Astrocyte of the cerebellum (primary cell): ENCODE measurements at regions of chr2 and their contacts with region 1.

Region 1: DNA sequence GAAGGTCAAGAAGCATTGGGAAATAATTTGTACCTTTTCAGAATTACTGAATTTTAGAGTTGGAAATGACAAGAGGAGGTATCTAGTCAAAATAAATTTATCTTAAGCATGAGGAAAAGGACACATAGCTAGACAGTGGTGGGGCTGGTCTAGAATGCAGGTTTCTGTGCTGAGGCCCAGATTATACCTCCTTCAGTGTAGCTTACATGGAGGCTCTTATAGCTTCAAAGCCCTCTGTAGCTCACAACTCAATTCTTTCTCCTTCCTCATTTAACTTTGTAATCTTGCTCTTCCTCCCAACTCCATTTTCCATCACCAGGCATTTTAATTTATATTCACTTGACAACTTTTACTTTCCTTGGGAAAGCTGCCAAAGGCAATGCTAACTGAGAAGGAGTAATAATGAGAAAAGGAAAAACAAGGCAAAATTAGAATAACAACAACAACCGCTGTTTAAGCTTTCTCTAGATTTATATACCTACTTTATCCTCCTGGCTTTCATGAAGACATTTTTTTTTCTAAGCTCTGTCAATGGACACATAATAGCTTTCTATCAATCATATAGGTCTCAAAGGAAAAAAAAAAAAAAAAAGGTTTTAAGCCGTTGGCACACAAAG is 58.5 kb downstream of the CLHC1 start:
- DNase-seq: no peak
- H3K4me3 ChIP-seq: no peak overlapping the region
- CTCF ChIP-seq: no peak

Region 2: DNA sequence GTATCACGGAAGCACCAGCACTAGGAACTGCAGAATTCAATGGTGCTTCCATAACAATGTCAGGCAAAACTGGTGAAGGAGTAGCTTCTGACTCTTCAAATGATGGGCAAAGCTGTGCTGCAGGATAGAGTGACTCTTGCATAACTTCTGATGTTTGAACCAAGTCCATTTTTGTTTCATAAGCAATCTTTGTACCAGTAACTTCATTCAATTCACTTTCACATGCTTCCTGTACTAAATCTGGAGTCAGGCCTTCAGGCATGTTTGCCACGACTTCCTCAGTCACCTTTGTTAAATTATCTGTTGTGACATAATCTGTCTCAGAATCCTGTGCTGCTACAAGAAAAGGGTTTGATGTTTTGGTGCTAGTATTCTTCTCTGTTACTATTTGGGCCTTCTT is 147.3 kb before region 1 on chr2:
- in situ Hi-C with region 1: loop called (anchors 5 kb)
- DNase-seq: no peak
- H3K4me3 ChIP-seq: no peak overlapping the region
- CTCF ChIP-seq: no peak